GM12878 (cell line): ENCODE measurements at regions of chr10 and their contacts with region 1.

Region 1: DNA sequence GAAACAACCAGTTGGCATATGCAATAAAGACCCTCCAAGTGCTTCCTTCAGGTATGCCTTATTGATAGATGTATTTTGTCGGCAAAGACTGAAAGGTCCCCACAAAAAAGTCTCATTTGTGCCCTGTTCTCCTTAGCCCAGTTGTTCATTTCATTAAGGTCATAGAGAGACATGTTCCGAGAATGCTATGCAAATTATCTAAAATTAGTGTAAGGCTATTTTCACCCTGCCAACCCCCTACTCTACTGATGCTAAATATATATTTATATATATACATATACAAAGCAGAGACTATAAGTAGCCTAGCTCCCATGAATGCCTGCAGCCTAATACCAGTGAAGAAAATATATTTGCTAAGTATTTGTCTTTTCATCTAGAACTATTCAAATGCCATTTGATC is 96.7 kb upstream of the ADO start:
- DNase-seq: peak; percentile 40
- ATAC-seq: peak; percentile 76
- H3K4me3 ChIP-seq: peak overlapping the region; percentile 9; the same call in 1 of the 2 replicates
- H3K27ac ChIP-seq: peak overlapping the region; percentile 61; the same call in 1 of the 2 replicates
- H3K4me1 ChIP-seq: peaks cover 30% of the 10 kb centered on the region
- H3K27me3 ChIP-seq: no peaks in the 10 kb centered on the region
- CTCF ChIP-seq: no peak
- EP300 ChIP-seq: peak; percentile 9 to 76; a peak in 2 of 4 replicates
- POLR2A ChIP-seq: no peak
- RAD21 ChIP-seq: 0 out of 2 replicates have a peak, but pooled peaks have one; percentile 20

Region 2: DNA sequence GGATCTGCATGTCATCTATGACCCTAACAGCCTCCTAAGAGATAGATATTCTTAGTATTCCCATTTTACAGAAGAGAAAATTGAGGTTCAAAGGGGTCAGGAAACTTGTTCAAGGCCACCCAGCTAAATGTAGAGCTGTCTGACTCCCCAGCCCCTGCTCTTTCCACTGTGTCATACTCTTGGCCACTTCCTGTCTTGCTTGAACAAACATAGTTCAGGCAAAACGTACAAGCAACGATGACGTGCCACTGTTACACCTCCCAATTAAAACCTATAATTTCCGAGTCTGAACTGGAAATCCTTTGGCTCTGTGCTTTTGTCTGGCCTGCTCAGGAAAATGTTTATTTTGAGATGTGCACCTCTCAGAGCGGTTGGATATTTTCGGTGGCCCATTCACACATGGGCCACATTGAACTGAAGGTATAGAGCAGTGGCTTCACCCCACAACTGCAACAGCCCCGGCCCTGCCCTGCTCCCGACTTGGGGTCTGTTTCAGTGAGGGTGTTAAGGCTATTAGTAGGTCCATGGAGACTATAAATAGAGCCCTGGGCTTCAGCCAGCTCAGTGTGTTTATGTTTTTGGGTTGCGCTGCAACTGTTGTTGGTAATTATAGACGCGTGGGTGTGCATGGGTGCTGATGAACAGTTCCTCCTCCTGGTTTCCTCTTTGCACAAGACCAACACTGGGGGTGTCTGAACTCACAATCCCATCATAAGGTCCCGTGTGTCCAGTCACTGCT is 75.6 kb before region 1 on chr10:
- CTCF ChIA-PET with region 1: no interaction called
- POLR2A ChIA-PET with region 1: no interaction called
- RAD21 ChIA-PET with region 1: interaction called, 21 read pairs
- SMC1A ChIA-PET with region 1: interaction called, 21 read pairs
- in situ Hi-C with region 1: no loop called
- intact Hi-C with region 1: no loop called
- DNase-seq: peak; percentile 80
- ATAC-seq: peak; percentile 85
- H3K4me3 ChIP-seq: 0 out of 2 replicates have a peak overlapping the region, but pooled peaks have one; percentile 1
- H3K27ac ChIP-seq: peak overlapping the region; percentile 71
- H3K4me1 ChIP-seq: peaks cover 56% of the 10 kb centered on the region
- H3K27me3 ChIP-seq: no peaks in the 10 kb centered on the region
- CTCF ChIP-seq: no peak
- EP300 ChIP-seq: peak; percentile 75 to 94
- POLR2A ChIP-seq: no peak
- RAD21 ChIP-seq: peak; percentile 29; the same call in 1 of the 2 replicates

Region 3: GRCh38 chr10:62689712-62690111 is 18.1 kb before region 1 on chr10:
- CTCF ChIA-PET with region 1: interaction called, 3 read pairs
- POLR2A ChIA-PET with region 1: interaction called, 5 read pairs
- RAD21 ChIA-PET with region 1: interaction called, 7 read pairs
- SMC1A ChIA-PET with region 1: interaction called, 23 read pairs
- in situ Hi-C with region 1: no loop called
- intact Hi-C with region 1: no loop called
- DNase-seq: no peak
- ATAC-seq: peak; percentile 50
- H3K4me3 ChIP-seq: no peak overlapping the region
- H3K27ac ChIP-seq: no peak overlapping the region; the same call in 1 of the 2 replicates
- H3K4me1 ChIP-seq: peaks cover 30% of the 10 kb centered on the region
- H3K27me3 ChIP-seq: no peaks in the 10 kb centered on the region
- CTCF ChIP-seq: no peak
- EP300 ChIP-seq: no peak
- POLR2A ChIP-seq: no peak
- RAD21 ChIP-seq: no peak

Region 4: GRCh38 chr10:62696798-62697197 is 11.0 kb before region 1 on chr10:
- CTCF ChIA-PET with region 1: interaction called, 11 read pairs
- POLR2A ChIA-PET with region 1: interaction called, 5 read pairs
- RAD21 ChIA-PET with region 1: no interaction called
- SMC1A ChIA-PET with region 1: interaction called, 23 read pairs
- in situ Hi-C with region 1: no loop called
- intact Hi-C with region 1: no loop called
- DNase-seq: no peak
- ATAC-seq: peak; percentile 62
- H3K4me3 ChIP-seq: no peak overlapping the region
- H3K27ac ChIP-seq: no peak overlapping the region
- H3K4me1 ChIP-seq: peaks cover 2% of the 10 kb centered on the region
- H3K27me3 ChIP-seq: no peaks in the 10 kb centered on the region
- CTCF ChIP-seq: no peak
- EP300 ChIP-seq: no peak
- POLR2A ChIP-seq: no peak
- RAD21 ChIP-seq: no peak

Region 5: DNA sequence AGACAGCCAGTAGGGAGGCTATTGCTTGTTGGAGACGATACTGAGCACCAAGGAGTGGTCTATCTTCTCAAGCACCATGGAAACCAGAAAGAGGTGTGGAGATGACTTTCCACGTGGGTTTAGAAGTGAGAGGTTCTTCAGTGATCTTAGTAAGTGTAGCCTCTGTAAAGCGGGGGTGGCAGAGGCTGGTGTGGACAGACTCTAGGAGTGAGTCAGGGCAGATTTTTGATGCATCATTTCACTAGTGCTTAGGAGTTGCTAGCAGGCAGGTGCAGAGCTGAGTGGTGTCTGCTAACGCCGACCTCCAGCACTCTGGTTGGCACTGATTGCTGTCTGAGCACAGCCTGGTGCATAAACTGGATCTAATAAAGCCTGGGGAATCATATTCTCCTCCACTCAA is 18.3 kb after region 1 on chr10:
- CTCF ChIA-PET with region 1: interaction called, 6 read pairs
- POLR2A ChIA-PET with region 1: interaction called, 5 read pairs
- RAD21 ChIA-PET with region 1: interaction called, 91 read pairs
- SMC1A ChIA-PET with region 1: interaction called, 104 read pairs
- in situ Hi-C with region 1: no loop called
- intact Hi-C with region 1: no loop called
- DNase-seq: no peak
- ATAC-seq: peak; percentile 97
- H3K4me3 ChIP-seq: no peak overlapping the region
- H3K27ac ChIP-seq: no peak overlapping the region
- H3K4me1 ChIP-seq: no peaks in the 10 kb centered on the region
- H3K27me3 ChIP-seq: no peaks in the 10 kb centered on the region
- CTCF ChIP-seq: no peak
- EP300 ChIP-seq: peak; percentile 63 to 69; a peak in 3 of 4 replicates
- POLR2A ChIP-seq: peak; percentile 36; the same call in 1 of the 2 replicates
- RAD21 ChIP-seq: peak; percentile 6; the same call in 1 of the 2 replicates

Region 6: DNA sequence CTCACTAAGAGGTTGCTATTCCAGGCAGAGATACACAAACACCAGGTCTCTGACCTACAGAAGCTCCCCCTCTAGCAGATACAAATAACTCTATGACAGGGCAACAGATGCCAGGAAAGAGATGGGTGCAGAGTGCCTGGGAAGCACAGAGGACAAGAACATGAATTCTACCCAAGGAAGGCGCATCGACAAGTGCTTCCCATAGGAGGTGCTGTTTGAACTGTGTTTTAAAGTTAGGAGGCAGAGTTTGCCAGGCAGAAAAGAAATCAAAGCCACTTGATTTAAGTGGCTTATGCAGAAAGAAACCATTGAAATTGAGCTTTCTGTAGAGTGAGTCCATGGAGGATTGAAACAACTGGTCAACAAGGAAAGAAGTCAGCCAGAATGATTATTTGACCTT is 143.6 kb after region 1 on chr10:
- CTCF ChIA-PET with region 1: no interaction called
- POLR2A ChIA-PET with region 1: no interaction called
- RAD21 ChIA-PET with region 1: no interaction called
- SMC1A ChIA-PET with region 1: no interaction called
- in situ Hi-C with region 1: no loop called
- intact Hi-C with region 1: no loop called
- DNase-seq: no peak
- ATAC-seq: no peak
- H3K4me3 ChIP-seq: no peak overlapping the region
- H3K27ac ChIP-seq: no peak overlapping the region
- H3K4me1 ChIP-seq: peaks cover 37% of the 10 kb centered on the region
- H3K27me3 ChIP-seq: no peaks in the 10 kb centered on the region
- CTCF ChIP-seq: peak; percentile 7 to 38 (median 27); a peak in 3 of 6 replicates
- EP300 ChIP-seq: no peak
- POLR2A ChIP-seq: no peak
- RAD21 ChIP-seq: peak; percentile 54